Natural killer cell (primary cell): ENCODE measurements at regions of chr17 and their contacts with region 1.

Region 1: DNA sequence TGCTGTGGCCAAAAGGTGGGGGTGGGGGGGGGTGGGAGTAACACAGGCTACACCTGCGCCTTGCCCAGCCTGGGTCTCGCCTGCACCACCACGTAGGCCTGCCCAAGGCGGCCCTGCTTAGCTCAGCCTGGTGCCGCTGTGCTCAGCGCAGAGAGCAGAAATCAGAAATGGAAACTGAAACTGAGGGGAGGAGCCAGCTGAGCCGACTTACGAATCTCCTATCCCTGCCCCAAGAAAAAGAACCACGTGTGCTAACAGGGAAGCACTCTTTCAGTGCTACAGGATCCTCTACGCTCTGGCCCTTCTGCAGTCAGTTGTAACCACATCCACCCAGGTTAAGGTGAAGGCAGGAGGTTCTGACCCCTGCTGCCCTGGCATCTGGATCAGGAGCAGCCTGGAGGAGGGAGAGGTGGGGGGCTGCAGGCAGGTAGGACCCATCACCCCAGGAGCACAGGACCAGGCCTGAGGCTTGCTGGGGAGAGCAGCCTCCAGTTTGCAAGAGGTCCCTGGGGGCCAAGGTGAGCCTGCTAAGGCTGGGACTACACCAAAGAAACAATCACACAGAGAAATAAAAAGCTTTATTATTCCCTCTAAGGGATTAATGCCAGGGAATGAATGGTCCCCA is at the start of gene DHX58:
- DNase-seq: peak; percentile 68 to 94
- ATAC-seq: peak; percentile 84 to 89 (median 86)
- H3K4me3 ChIP-seq: peak within 1 kb of the TSS; percentile 45
- H3K4me3 Mint-ChIP-seq: peak within 1 kb of the TSS; percentile 86
- H3K27ac ChIP-seq: peak within 1 kb of the TSS; percentile 78
- H3K27ac Mint-ChIP-seq: peak within 1 kb of the TSS; percentile 89 to 95
- H3K4me1 ChIP-seq: peaks cover 45% of the 10 kb centered on the region
- H3K4me1 Mint-ChIP-seq: peaks cover 9 to 31% of the 10 kb centered on the region in 2 donors
- H3K27me3 ChIP-seq: no peaks in the 10 kb centered on the region
- H3K27me3 Mint-ChIP-seq: no peaks in the 10 kb centered on the region
- CTCF ChIP-seq: no peak
- total RNA-seq, gene DHX58: 22.0 to 29.0 (median 24.5) TPM

Region 2: GRCh38 chr17:41738077-41738735 is 374.5 kb before region 1 on chr17:
- intact Hi-C with region 1: loop called (anchors 5 kb)
- DNase-seq: peak; percentile 77 to 91
- ATAC-seq: peak; percentile 89 to 99 (median 98)
- H3K4me3 ChIP-seq: no peak overlapping the region
- H3K4me3 Mint-ChIP-seq: no peak overlapping the region
- H3K27ac ChIP-seq: no peak overlapping the region
- H3K27ac Mint-ChIP-seq: no peak overlapping the region
- H3K4me1 ChIP-seq: peaks cover 16% of the 10 kb centered on the region
- H3K4me1 Mint-ChIP-seq: no peaks in the 10 kb centered on the region
- H3K27me3 ChIP-seq: peaks cover 26% of the 10 kb centered on the region
- H3K27me3 Mint-ChIP-seq: peaks cover 20 to 27% of the 10 kb centered on the region in 2 donors
- CTCF ChIP-seq: peak; percentile 98

Region 3: GRCh38 chr17:41966463-41967140 is 146.1 kb before region 1 on chr17 and contains the start of gene CNP:
- intact Hi-C with region 1: loop called (anchors 1 kb)
- DNase-seq: peak; percentile 88 to 95
- ATAC-seq: peak; percentile 92 to 95 (median 92)
- H3K4me3 ChIP-seq: peak within 1 kb of the TSS; percentile 91
- H3K4me3 Mint-ChIP-seq: peak within 1 kb of the TSS; percentile 74
- H3K27ac ChIP-seq: peak within 1 kb of the TSS; percentile 72
- H3K27ac Mint-ChIP-seq: peak within 1 kb of the TSS; percentile 68 to 76
- H3K4me1 ChIP-seq: peaks cover 27% of the 10 kb centered on the region
- H3K4me1 Mint-ChIP-seq: peaks cover 24 to 32% of the 10 kb centered on the region in 2 donors
- H3K27me3 ChIP-seq: no peaks in the 10 kb centered on the region
- H3K27me3 Mint-ChIP-seq: no peaks in the 10 kb centered on the region
- CTCF ChIP-seq: no peak
- total RNA-seq, gene CNP: 32.4 to 44.8 (median 38.2) TPM

Region 4: GRCh38 chr17:42025191-42025579 is 87.5 kb before region 1 on chr17:
- intact Hi-C with region 1: loop called (anchors 1 kb)
- DNase-seq: no peak
- ATAC-seq: no peak
- H3K4me3 ChIP-seq: no peak overlapping the region
- H3K4me3 Mint-ChIP-seq: no peak overlapping the region
- H3K27ac ChIP-seq: no peak overlapping the region
- H3K27ac Mint-ChIP-seq: peak overlapping the region; percentile 43 to 84
- H3K4me1 ChIP-seq: peaks cover 36% of the 10 kb centered on the region
- H3K4me1 Mint-ChIP-seq: peaks cover 25 to 35% of the 10 kb centered on the region in 2 donors
- H3K27me3 ChIP-seq: no peaks in the 10 kb centered on the region
- H3K27me3 Mint-ChIP-seq: no peaks in the 10 kb centered on the region
- CTCF ChIP-seq: peak; percentile 55

Region 5: DNA sequence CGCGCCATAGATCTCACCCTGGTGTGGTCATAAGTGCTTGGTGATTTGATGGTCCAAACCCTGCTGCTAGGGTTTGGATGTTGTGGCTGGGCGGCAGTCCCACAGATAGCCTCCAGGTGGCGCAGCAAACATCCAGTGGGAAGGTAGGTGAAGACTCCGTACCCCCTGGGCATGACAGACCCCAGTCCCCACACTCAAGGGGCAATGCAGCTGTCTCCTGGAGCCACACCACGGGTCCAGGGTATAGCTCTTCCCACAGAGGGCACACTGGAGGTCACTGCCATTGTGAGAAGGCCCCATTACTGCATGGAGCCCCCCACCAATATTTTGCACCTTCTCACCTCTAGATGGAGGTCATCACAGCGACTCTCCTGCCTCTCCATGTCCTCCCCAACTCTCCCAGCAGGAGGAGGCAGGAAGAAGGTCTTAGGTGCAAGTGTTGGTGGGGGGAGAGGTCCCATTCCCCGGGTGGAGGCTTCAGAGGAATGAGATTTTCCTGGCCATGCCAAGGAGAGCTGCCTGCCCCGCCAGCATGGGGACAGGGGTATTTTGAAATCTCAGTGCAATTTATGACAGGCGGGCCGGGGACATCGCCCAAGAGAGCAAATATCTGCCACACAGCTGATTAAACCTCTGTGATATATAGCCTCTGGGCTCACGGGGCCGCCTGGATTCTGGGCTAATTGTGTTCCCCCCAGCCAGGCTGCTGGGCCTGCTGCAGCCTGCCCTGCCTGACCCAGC is 45.1 kb before region 1 on chr17:
- intact Hi-C with region 1: loop called (anchors 1 kb)
- DNase-seq: peak; percentile 65 to 80
- ATAC-seq: peak; percentile 58 to 70 (median 68)
- H3K4me3 ChIP-seq: no peak overlapping the region
- H3K4me3 Mint-ChIP-seq: no peak overlapping the region
- H3K27ac ChIP-seq: no peak overlapping the region
- H3K27ac Mint-ChIP-seq: no peak overlapping the region
- H3K4me1 ChIP-seq: peaks cover 19% of the 10 kb centered on the region
- H3K4me1 Mint-ChIP-seq: peaks cover 5 to 20% of the 10 kb centered on the region in 2 donors
- H3K27me3 ChIP-seq: peaks cover 4% of the 10 kb centered on the region
- H3K27me3 Mint-ChIP-seq: peaks cover 6 to 18% of the 10 kb centered on the region in 2 donors
- CTCF ChIP-seq: peak; percentile 95

Region 6: DNA sequence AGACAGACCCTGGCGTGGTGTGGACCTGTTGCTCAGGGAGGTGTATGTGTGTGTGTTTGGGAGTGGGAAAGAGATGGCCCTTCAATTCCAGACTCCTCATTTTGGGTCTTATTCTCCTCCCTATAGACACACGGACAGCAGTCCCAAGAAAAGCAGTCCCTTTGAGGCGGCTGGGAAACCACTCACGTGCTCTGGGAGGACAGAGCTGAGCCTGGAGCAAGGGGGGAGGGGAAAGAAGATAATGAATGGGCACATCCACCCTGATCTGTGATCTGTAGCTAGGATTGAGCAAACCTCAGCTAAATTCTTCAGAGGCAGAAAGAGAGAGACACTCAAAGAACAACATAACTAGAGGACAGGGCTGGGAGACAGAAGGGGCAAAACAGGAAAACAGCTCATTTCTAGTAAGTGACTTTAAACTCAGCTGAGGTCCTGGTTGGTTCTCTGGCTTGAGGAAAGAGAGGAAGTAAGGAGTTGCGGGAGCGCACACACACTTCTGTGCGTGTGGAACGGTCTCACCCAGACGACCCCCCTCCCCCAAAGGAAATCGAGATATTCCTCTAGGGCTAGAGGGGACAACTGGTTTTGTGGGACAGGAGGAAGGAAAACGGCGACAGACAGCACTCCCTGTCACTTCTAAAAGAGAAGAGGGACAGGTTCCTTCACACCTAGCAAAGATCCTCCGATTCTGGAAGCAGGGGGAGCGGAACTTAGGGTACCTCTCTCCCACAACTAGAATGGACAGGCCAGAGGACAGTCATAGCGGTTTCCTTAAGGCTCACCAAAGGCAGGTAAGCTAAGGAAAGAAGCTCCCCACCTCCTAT is 41.5 kb after region 1 on chr17:
- intact Hi-C with region 1: loop called (anchors 1 kb)
- DNase-seq: peak in 1 of 2 donors; percentile 33
- ATAC-seq: no peak
- H3K4me3 ChIP-seq: peak overlapping the region; percentile 89
- H3K4me3 Mint-ChIP-seq: peak overlapping the region; percentile 94
- H3K27ac ChIP-seq: peak overlapping the region; percentile 73
- H3K27ac Mint-ChIP-seq: peak overlapping the region; percentile 84 to 87
- H3K4me1 ChIP-seq: peaks cover 27% of the 10 kb centered on the region
- H3K4me1 Mint-ChIP-seq: peaks cover 19 to 44% of the 10 kb centered on the region in 2 donors
- H3K27me3 ChIP-seq: no peaks in the 10 kb centered on the region
- H3K27me3 Mint-ChIP-seq: no peaks in the 10 kb centered on the region
- CTCF ChIP-seq: no peak